Activated CD4-positive, alpha-beta T cell treated with anti-CD3 and anti-CD28 coated beads for 36 hours (primary cell): ENCODE measurements at regions of chr21 and their contacts with region 1.

Region 1: GRCh38 chr21:37009740-37010341 is 3.3 kb downstream of the RIPPLY3 start:
- DNase-seq: peak; percentile 90
- ATAC-seq: peak; percentile 96
- H3K4me3 Mint-ChIP-seq: peak overlapping the region; percentile 43
- H3K27ac Mint-ChIP-seq: no peak overlapping the region
- H3K4me1 Mint-ChIP-seq: peaks cover 13% of the 10 kb centered on the region
- H3K27me3 Mint-ChIP-seq: peaks cover 38% of the 10 kb centered on the region

Region 2: DNA sequence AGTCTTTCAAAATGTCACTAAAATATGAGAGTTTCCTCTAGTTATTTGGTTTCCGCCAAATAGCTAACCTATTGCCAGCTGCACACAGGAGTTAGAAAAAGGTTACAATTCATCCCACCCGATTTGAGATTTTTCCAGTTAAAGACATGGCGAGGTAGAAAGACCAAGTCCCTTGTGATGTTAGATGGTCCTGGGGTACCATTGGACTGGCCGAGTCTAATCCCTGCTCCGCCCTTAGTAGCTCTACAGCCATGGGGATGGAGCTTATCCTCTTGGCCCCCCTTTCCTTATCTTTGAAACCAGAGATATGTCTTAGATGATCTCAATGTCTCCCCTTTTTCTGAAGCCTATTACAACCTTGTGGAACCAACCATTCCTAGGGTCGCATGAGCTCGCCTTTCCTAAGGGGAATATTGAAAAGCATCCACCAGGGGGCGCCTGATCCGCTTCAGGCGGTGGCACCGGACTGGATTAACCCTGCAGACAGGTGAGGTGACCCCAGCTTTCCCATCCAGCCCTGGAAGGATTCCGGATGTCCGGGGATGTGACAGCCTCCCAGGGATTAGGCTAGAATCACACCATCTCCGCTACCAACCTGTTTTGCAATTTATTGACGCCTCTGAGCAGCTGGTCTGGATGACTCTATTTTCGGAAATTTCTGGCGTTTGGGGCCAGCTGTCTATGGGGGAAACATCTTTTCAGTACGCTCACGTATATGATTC is 379.2 kb before region 1 on chr21:
- CTCF ChIA-PET with region 1: interaction called, 12 read pairs
- POLR2A ChIA-PET with region 1: no interaction called
- intact Hi-C with region 1: no loop called
- DNase-seq: peak; percentile 80
- ATAC-seq: no peak
- H3K4me3 Mint-ChIP-seq: no peak overlapping the region
- H3K27ac Mint-ChIP-seq: no peak overlapping the region
- H3K4me1 Mint-ChIP-seq: peaks cover 3% of the 10 kb centered on the region
- H3K27me3 Mint-ChIP-seq: peaks cover 3% of the 10 kb centered on the region

Region 3: DNA sequence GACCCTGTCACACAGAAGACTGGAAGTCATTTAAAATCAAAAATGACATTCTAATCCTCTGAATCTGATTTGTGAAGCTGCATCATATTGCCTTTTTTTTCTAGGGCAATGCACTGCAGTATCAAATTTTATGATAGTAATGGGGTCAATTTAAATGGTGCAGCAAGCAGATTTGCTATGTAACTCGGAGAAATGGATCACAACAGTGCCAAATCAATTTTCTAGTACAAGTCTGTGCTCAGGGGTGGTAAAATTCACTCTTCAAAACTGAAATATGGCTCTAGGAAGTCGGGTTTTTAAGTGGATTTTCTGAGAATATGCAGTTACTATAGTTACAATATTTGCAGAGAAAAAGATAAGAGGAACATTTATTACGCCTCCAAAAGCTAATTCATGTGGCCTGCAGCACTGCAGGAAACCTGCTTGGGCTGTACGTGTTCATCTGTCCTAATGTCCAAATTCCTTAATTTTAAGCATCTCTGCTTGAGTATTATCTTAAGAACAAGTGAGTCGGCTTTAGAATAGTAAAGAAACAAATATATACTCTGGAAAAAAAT is 74.9 kb before region 1 on chr21:
- CTCF ChIA-PET with region 1: interaction called, 16 read pairs
- POLR2A ChIA-PET with region 1: no interaction called
- intact Hi-C with region 1: loop called (anchors 1 to 2 kb)
- DNase-seq: no peak
- ATAC-seq: no peak
- H3K4me3 Mint-ChIP-seq: no peak overlapping the region
- H3K27ac Mint-ChIP-seq: no peak overlapping the region
- H3K4me1 Mint-ChIP-seq: no peaks in the 10 kb centered on the region
- H3K27me3 Mint-ChIP-seq: no peaks in the 10 kb centered on the region

Region 4: DNA sequence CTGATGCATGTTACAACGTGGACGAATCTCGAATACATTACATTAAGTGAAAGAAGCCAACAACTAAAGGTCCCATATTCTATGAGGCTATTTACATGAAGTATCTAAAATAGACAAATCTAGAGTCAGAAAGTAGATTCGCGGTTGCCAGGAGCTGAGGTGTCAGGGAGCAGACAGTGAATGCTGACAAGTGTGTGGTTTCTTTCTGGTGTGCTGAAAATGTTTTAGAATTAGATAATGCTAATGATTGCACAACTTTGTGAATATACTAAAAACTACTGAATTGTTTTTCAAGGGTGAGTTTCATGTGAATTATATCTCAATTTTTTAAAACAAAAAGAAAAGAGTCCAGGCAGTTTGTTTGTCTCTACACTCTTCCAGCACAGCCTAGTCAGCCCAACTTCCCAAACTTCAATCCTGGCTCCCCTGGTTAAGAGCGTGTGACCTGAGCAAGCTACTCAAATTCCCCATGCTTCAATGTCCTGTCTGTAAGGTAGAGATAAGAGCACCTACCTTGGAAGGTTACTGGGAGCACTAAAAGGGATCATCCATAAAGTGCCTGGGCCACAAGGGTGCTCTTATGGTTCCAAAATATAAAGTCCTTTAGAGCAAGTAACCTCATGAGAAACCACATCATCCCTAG is 64.2 kb before region 1 on chr21:
- CTCF ChIA-PET with region 1: interaction called, 16 read pairs
- POLR2A ChIA-PET with region 1: no interaction called
- intact Hi-C with region 1: no loop called
- DNase-seq: no peak
- ATAC-seq: no peak
- H3K4me3 Mint-ChIP-seq: no peak overlapping the region
- H3K27ac Mint-ChIP-seq: no peak overlapping the region
- H3K4me1 Mint-ChIP-seq: no peaks in the 10 kb centered on the region
- H3K27me3 Mint-ChIP-seq: no peaks in the 10 kb centered on the region

Region 5: GRCh38 chr21:36966066-36966820 is 43.6 kb before region 1 on chr21 and contains the start of gene HLCS:
- CTCF ChIA-PET with region 1: interaction called, 11 read pairs
- POLR2A ChIA-PET with region 1: no interaction called
- intact Hi-C with region 1: loop called in 1 of 2 experiments (anchors 1 kb)
- DNase-seq: peak; percentile 84
- ATAC-seq: peak; percentile 90
- H3K4me3 Mint-ChIP-seq: peak within 1 kb of the TSS; percentile 73
- H3K27ac Mint-ChIP-seq: peak within 1 kb of the TSS; percentile 88
- H3K4me1 Mint-ChIP-seq: peaks cover 9% of the 10 kb centered on the region
- H3K27me3 Mint-ChIP-seq: no peaks in the 10 kb centered on the region
- total RNA-seq, gene HLCS: 14.3 to 15.0 TPM

Region 6: GRCh38 chr21:36976882-36977651 is 32.8 kb before region 1 on chr21:
- CTCF ChIA-PET with region 1: interaction called, 8 read pairs
- POLR2A ChIA-PET with region 1: interaction called, 3 read pairs
- intact Hi-C with region 1: loop called in 1 of 2 experiments (anchors 1 kb)
- DNase-seq: peak; percentile 51
- ATAC-seq: peak; percentile 79
- H3K4me3 Mint-ChIP-seq: no peak overlapping the region
- H3K27ac Mint-ChIP-seq: peak overlapping the region; percentile 42
- H3K4me1 Mint-ChIP-seq: peaks cover 22% of the 10 kb centered on the region
- H3K27me3 Mint-ChIP-seq: peaks cover 2% of the 10 kb centered on the region

Region 7: DNA sequence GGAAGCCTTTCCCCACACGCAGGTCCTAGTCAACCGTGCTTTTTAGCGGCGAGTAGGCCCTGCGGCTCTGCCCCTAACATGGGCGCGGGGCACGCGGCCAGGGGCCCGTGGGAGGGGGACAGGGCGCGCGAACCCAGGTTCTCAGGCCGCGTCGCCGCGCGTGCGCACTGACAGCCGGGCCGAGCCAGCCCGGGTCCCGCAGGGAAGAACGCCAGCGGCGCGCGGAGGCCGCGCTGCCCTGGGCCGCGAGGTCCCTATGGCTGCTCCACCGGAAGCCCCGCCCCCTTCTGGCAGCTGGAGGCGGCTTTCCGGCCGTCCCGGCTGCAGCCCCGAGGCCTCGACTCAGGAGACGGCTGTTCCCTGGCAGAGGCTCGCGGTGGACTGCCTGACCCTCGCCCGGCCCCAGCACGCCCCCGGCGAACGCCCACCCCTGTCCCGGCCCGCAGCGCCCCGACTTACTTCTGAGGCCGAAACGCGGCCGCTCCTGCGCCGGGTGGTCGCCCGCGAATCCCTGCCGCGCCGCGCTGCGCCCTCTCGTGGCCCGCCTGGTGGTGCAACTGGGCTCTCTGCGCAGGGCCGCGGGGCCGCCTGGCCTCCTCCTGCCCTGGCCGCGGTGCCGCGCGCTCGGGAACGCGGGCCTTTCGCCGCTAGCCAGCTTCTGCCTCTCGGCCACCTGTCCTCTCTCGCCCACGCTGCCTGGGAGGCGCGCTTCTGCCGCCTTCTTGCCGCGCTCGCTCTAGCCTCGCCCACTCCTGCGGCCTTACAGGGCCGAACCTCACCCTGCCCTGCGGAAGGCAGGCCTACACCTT is 19.9 kb before region 1 on chr21:
- CTCF ChIA-PET with region 1: interaction called, 22 read pairs
- POLR2A ChIA-PET with region 1: no interaction called
- intact Hi-C with region 1: loop called in 1 of 2 experiments (anchors 2 kb)
- DNase-seq: peak; percentile 94
- ATAC-seq: peak; percentile 88
- H3K4me3 Mint-ChIP-seq: peak overlapping the region; percentile 71
- H3K27ac Mint-ChIP-seq: peak overlapping the region; percentile 88
- H3K4me1 Mint-ChIP-seq: peaks cover 47% of the 10 kb centered on the region
- H3K27me3 Mint-ChIP-seq: no peaks in the 10 kb centered on the region